ENCODE measurements at regions of chr1 and their contacts with region 1.

Region 1: GRCh38 chr1:37474046-37474759 is at the start of gene ZC3H12A:
- DNase-seq: peak; percentile 87 to 98 (median 93)
- ATAC-seq: peak; percentile 82
- H3K4me3 ChIP-seq: peak within 1 kb of the TSS; percentile 97
- H3K4me3 Mint-ChIP-seq: peak within 1 kb of the TSS; percentile 91 to 99 (median 96)
- H3K27ac ChIP-seq: peak within 1 kb of the TSS; percentile 95
- H3K27ac Mint-ChIP-seq: peak within 1 kb of the TSS; percentile 93 to 99 (median 98)
- H3K4me1 ChIP-seq: peaks cover 28 to 33% of the 10 kb centered on the region in 2 donors
- H3K4me1 Mint-ChIP-seq: peaks cover 43 to 59% (median 54%) of the 10 kb centered on the region in 7 donors
- H3K27me3 ChIP-seq: no peaks in the 10 kb centered on the region
- H3K27me3 Mint-ChIP-seq: no peaks in the 10 kb centered on the region
- total RNA-seq, gene ZC3H12A: 35.0 to 122 (median 46.7) TPM

Region 2: GRCh38 chr1:37458528-37458927 is 15.7 kb before region 1 on chr1:
- CTCF ChIA-PET with region 1: interaction called, 15 read pairs
- POLR2A ChIA-PET with region 1: interaction called, 24 read pairs
- intact Hi-C with region 1: loop called in 1 of 2 experiments (anchors 1 kb)
- DNase-seq: no peak
- ATAC-seq: no peak
- H3K4me3 ChIP-seq: no peak overlapping the region
- H3K4me3 Mint-ChIP-seq: no peak overlapping the region
- H3K27ac ChIP-seq: no peak overlapping the region
- H3K27ac Mint-ChIP-seq: peak overlapping the region in 3 of 9 donors; percentile 30 to 78 (median 46)
- H3K4me1 ChIP-seq: no peaks in the 10 kb centered on the region
- H3K4me1 Mint-ChIP-seq: peaks cover 4 to 16% (median 11%) of the 10 kb centered on the region in 7 donors
- H3K27me3 ChIP-seq: no peaks in the 10 kb centered on the region
- H3K27me3 Mint-ChIP-seq: no peaks in the 10 kb centered on the region

Region 3: DNA sequence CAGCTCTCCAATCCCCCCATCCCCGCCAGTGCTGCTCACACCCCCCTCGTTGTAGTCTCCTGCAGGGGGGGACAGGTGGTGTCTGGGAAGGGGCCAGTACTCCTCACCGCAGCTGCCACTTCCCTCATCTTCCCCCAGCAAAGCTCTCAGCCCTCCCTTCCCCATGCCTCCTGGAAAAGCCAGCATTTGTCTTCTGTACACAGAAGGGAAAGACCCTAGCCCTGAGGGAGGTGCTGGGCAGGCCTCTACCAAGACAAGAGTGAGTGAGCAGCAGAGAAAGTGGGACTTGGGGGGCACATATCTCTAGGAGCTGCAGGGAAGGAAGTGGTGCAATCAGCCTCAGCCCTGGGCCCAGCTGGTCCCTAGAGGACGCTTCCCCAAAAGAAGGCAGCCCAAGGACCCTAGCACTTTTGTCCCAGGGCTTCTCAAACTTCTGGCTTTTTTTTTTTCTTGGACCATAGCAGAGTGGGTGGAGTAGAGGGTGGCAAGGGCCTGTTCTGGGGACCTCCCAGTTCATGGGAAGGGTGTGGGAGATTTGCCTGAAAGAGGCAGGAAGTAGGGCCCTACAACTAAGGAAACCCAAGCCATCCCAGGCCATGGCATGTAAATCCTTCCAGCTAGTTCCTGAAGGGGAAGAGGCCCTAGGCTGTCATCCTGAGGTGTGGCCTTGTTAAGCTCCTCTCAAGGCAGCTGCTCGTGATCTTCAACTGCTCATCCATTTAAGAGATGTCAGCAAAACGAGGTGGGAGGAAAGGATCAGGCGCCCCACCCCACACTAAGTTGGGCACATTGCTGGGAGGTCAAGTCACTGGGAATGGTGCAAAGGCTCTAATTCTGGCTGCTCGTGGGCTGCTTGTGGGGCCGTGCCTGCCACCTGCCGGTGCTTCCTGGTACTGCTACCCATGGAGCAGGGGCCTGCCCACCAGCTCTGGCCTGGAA is 12.7 kb after region 1 on chr1:
- CTCF ChIA-PET with region 1: interaction called, 103 read pairs
- POLR2A ChIA-PET with region 1: interaction called, 90 read pairs
- intact Hi-C with region 1: loop called (anchors 1 kb)
- DNase-seq: peak; percentile 57 to 85 (median 72)
- ATAC-seq: peak; percentile 82
- H3K4me3 ChIP-seq: no peak overlapping the region
- H3K4me3 Mint-ChIP-seq: peak overlapping the region in 1 of 10 donors; percentile 66
- H3K27ac ChIP-seq: peak overlapping the region; percentile 54
- H3K27ac Mint-ChIP-seq: peak overlapping the region; percentile 10 to 91 (median 72)
- H3K4me1 ChIP-seq: peaks cover 9 to 11% of the 10 kb centered on the region in 2 donors
- H3K4me1 Mint-ChIP-seq: peaks cover 11 to 26% (median 17%) of the 10 kb centered on the region in 7 donors
- H3K27me3 ChIP-seq: no peaks in the 10 kb centered on the region
- H3K27me3 Mint-ChIP-seq: no peaks in the 10 kb centered on the region

Region 4: GRCh38 chr1:37553927-37554808 is 80.0 kb after region 1 on chr1 and contains the start of gene SNIP1:
- CTCF ChIA-PET with region 1: no interaction called
- POLR2A ChIA-PET with region 1: interaction called, 9 read pairs
- intact Hi-C with region 1: loop called (anchors 1 to 2 kb)
- DNase-seq: peak; percentile 67 to 94 (median 92)
- ATAC-seq: peak; percentile 99
- H3K4me3 ChIP-seq: peak within 1 kb of the TSS; percentile 92
- H3K4me3 Mint-ChIP-seq: peak within 1 kb of the TSS; percentile 97 to 100 (median 99)
- H3K27ac ChIP-seq: peak within 1 kb of the TSS; percentile 94
- H3K27ac Mint-ChIP-seq: peak within 1 kb of the TSS; percentile 91 to 99 (median 98)
- H3K4me1 ChIP-seq: peaks cover 10 to 24% of the 10 kb centered on the region in 2 donors
- H3K4me1 Mint-ChIP-seq: peaks cover 23 to 51% (median 45%) of the 10 kb centered on the region in 7 donors
- H3K27me3 ChIP-seq: no peaks in the 10 kb centered on the region
- H3K27me3 Mint-ChIP-seq: peaks cover 0 to 6% (median 0%) of the 10 kb centered on the region in 5 donors
- total RNA-seq, gene SNIP1: 27.8 to 53.6 (median 36.7) TPM

Region 5: DNA sequence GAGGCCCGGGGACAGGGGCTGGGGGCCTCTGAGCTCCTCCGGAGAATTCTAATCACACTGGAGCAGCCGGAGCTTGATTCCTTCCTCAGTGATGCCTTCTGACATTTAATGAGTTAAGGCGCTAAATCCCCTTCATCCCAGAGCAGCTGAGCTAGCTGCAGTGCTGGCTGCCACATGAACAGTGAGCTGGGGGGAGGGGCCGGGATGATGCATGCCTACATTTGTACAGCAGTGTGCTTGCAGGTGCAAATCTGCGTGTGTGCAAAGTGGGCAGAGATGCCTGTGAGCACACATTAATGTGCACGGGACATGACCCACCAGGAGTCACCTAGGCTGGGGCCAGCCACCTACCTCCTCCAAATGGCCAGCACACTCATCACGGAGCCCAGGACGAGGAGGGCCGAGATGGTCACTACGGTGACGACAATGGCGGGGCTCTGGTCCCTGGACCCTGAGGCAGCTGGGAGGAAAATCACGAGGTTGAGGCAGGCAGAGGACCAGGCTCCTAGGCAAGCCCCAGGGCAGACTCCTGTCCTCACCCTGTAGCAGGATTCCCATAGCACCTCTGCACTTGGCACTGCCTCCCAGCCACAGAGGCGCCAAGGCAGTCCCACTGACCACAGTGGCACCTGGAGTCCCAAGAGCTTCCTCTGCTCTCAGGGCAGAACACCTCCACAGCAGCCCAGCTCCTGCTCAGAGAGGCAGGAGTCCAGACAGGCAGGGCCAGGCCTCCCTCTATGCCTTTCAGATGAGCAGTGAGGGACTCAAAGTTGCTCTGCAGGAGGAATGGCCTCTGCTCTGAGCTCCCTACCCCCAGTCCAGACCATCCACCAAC is 252.8 kb after region 1 on chr1:
- CTCF ChIA-PET with region 1: no interaction called
- POLR2A ChIA-PET with region 1: no interaction called
- intact Hi-C with region 1: no loop called
- DNase-seq: no peak
- ATAC-seq: no peak
- H3K4me3 ChIP-seq: no peak overlapping the region
- H3K4me3 Mint-ChIP-seq: no peak overlapping the region
- H3K27ac ChIP-seq: no peak overlapping the region
- H3K27ac Mint-ChIP-seq: no peak overlapping the region
- H3K4me1 ChIP-seq: no peaks in the 10 kb centered on the region
- H3K4me1 Mint-ChIP-seq: no peaks in the 10 kb centered on the region
- H3K27me3 ChIP-seq: no peaks in the 10 kb centered on the region
- H3K27me3 Mint-ChIP-seq: peaks cover 16 to 41% (median 29%) of the 10 kb centered on the region in 5 donors

Region 6: DNA sequence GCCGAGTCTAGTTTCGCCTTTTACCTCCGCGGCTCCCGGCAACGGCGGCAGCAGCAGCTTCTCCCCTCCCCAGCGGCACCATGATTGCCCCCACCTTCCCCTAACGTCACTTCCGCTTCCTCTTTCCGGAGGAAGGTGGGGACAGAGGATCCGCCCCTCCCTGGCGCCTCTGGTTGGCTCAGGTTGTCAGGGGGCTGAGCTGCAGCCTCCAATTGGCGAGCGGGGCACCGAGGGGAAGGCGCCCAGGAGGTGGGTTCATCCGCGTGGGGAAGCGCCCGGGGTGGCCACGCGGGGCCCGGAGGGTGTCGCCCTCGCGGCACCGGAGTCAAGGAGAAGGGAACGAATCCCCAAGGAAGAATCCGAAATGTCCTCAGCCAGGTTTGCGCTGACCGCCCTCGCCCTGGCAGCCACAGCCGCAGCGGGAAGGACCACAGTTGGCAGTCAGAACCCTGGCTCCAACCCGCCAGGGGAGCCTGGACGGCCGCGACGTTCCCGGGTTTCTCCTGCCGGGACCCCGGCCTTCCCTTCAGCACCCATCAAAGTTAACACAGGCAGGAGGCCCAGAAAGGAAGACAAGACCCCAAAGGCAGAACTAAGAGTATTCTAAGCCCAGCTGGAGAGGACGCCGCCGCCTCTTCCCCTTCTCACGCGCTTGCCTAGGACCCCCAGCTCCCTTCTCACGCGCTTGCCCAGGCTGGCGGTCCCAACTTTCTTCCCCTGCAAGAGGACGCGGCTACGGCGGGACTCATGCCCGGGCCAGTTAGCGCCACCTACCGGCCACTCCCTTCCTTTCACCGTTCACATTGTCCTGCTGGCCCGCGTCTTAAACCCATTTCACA is 385.5 kb after region 1 on chr1 and contains the start of gene MTF1:
- CTCF ChIA-PET with region 1: no interaction called
- POLR2A ChIA-PET with region 1: interaction called, 6 read pairs
- intact Hi-C with region 1: loop called in 1 of 2 experiments (anchors 1 kb)
- DNase-seq: peak; percentile 85 to 98 (median 97)
- ATAC-seq: peak; percentile 99
- H3K4me3 ChIP-seq: peak within 1 kb of the TSS; percentile 94
- H3K4me3 Mint-ChIP-seq: peak within 1 kb of the TSS; percentile 89 to 100 (median 96)
- H3K27ac ChIP-seq: peak within 1 kb of the TSS; percentile 89
- H3K27ac Mint-ChIP-seq: peak within 1 kb of the TSS; percentile 90 to 99 (median 95)
- H3K4me1 ChIP-seq: peaks cover 12 to 19% of the 10 kb centered on the region in 2 donors
- H3K4me1 Mint-ChIP-seq: peaks cover 26 to 39% (median 33%) of the 10 kb centered on the region in 7 donors
- H3K27me3 ChIP-seq: no peaks in the 10 kb centered on the region
- H3K27me3 Mint-ChIP-seq: no peaks in the 10 kb centered on the region
- total RNA-seq, gene MTF1: 22.9 to 45.2 (median 27.1) TPM

Region 7: DNA sequence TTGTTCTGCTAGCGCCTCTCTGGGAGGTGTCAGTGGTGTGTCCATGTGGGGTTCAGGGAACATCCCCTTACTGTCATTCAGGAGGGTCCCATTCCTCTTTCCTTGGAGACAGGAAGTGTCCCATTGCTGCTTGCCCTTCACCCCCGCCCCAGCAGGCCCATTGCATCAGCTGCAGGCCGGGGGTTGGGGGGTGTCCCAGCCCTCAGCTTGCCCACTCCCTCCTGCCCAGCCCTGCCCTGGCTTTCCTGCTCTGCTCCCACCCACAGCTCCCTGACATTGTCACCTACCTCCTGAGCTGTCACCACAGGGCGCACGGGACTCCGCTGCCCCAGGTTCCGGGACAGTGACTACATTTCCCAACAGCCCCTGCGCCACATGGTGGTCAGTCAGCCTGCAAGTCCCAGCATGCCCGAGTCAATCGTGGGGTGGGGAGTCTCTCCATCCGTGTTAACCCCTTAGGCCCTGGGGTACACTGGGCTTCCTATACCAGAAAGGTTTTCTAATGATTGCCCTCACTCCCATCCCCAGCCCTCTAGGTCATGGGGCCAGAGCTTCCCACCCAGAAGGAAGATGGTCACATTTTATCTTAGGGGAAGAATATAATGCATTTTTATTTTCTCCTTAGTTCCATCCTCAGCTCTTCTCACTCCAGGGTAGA is 472.6 kb after region 1 on chr1 and contains the start of gene INPP5B:
- CTCF ChIA-PET with region 1: no interaction called
- POLR2A ChIA-PET with region 1: no interaction called
- intact Hi-C with region 1: loop called in 1 of 2 experiments (anchors 5 kb)
- DNase-seq: peak; percentile 25 to 79 (median 53)
- ATAC-seq: peak; percentile 91
- H3K4me3 ChIP-seq: peak within 1 kb of the TSS; percentile 61
- H3K4me3 Mint-ChIP-seq: peak within 1 kb of the TSS; percentile 81 to 98 (median 92)
- H3K27ac ChIP-seq: peak within 1 kb of the TSS; percentile 62
- H3K27ac Mint-ChIP-seq: peak within 1 kb of the TSS; percentile 66 to 97 (median 89)
- H3K4me1 ChIP-seq: peaks cover 0 to 7% of the 10 kb centered on the region in 2 donors
- H3K4me1 Mint-ChIP-seq: peaks cover 13 to 26% (median 15%) of the 10 kb centered on the region in 7 donors
- H3K27me3 ChIP-seq: no peaks in the 10 kb centered on the region
- H3K27me3 Mint-ChIP-seq: no peaks in the 10 kb centered on the region
- total RNA-seq, gene INPP5B: 23.3 to 35.7 (median 30.6) TPM